ENCODE measurements at regions of chr9 and their contacts with region 1.

Region 1: DNA sequence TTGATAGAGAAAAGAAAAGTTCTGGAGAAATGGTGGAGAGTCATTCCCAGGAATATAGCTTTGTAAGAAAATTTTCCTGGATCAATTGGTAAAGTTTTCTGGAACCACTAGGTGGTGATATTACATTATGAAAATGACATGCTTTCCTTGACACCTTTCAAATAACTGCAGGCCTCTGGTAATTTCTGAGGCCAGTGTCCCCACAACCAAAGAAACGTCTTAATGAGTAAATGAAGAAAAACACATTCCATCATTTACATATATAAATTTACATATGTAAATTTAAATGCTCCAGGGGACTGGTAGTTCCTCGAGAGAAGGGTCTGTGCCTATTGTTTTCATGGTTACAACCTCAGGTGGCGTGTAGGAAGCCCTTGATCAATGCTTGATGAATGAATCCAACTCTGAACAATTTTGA is 17.2 kb upstream of the RGS3 start:
- DNase-seq: no peak
- H3K4me3 ChIP-seq: no peak overlapping the region
- H3K27ac ChIP-seq: no peak overlapping the region
- H3K4me1 ChIP-seq: no peaks in the 10 kb centered on the region
- H3K27me3 ChIP-seq: no peaks in the 10 kb centered on the region
- CTCF ChIP-seq: peak in 2 of 3 experiments; percentile 47; a peak in 2 of 4 replicates
- EP300 ChIP-seq: no peak
- POLR2A ChIP-seq: no peak
- RAD21 ChIP-seq: peak; percentile 86 to 88

Region 2: DNA sequence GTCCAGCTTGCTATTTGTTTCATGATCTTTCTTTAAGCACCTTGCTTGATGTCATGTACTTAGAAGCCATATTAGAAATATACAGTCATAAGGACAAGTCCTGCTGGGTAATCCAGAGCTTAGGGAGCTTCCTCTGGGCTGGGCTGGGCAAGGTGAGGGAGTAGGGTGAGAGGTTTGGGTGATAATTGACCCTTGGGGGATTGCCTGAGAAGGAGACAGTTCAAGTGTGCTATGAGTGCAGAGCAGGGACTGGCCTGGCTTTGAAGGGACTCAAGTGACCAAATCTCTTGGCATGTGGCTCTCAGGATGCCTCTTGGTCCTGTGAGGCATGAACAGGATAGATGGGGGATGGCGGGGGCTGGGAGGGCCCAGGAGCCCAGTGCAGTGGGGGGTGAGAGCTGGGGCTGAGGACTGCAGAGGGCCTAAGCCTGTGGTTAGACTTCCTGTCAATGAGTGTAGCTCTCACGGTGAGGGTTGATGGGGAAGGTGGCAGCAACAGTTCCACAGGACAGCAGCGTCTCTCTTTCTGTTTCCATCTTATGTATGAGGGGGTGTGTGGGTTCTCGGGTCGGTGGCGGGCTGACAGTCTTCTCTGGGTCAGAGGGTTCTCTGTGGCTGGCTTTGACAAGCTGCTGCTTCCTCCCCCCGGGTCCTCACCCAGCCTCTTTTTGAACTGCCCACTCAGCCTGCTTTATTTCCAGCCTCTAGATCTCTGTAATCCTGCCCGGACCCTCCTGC is 70.7 kb after region 1 on chr9:
- CTCF ChIA-PET with region 1: interaction called, 10 read pairs
- POLR2A ChIA-PET with region 1: no interaction called
- DNase-seq: no peak
- H3K4me3 ChIP-seq: no peak overlapping the region
- H3K27ac ChIP-seq: no peak overlapping the region
- H3K4me1 ChIP-seq: no peaks in the 10 kb centered on the region
- H3K27me3 ChIP-seq: no peaks in the 10 kb centered on the region
- CTCF ChIP-seq: no peak
- EP300 ChIP-seq: no peak
- POLR2A ChIP-seq: no peak
- RAD21 ChIP-seq: no peak